GM13976 (cell line): ENCODE measurements at regions of chr10 and their contacts with region 1.

Region 1: DNA sequence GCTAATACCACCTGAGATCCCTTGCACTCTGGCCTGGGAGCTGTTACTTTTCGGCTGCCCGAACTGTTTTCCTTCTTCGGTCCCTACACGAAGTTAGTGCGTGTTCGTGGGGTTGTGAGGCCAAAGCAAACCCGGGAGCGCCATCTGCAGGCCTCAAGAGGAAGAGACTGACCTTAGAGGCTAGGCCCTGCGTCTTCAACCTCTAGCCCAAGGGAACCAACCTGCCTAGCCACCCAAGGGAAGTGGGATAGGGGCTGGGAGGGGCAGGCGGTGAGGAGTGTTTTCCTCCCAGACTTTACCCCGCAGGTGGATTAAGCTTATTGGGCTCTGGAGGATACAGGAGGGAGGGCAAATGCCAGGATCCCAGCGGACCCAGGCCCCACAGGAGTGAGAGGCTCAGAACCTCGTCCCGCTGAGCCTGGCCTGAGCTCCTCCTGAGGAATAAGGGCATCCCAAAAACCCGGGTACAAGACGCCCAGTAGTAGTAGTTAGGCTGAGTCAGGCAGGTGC is 1.7 kb upstream of the PAX2 start:
- DNase-seq: peak; percentile 85
- CTCF ChIP-seq: peak; percentile 64

Region 2: GRCh38 chr10:100229819-100230422 is 513.8 kb before region 1 on chr10:
- in situ Hi-C with region 1: no loop called
- DNase-seq: no peak
- CTCF ChIP-seq: no peak

Region 3: GRCh38 chr10:100508691-100509150 is 235.0 kb before region 1 on chr10:
- in situ Hi-C with region 1: no loop called
- DNase-seq: peak; percentile 56
- CTCF ChIP-seq: peak; percentile 22

Region 4: DNA sequence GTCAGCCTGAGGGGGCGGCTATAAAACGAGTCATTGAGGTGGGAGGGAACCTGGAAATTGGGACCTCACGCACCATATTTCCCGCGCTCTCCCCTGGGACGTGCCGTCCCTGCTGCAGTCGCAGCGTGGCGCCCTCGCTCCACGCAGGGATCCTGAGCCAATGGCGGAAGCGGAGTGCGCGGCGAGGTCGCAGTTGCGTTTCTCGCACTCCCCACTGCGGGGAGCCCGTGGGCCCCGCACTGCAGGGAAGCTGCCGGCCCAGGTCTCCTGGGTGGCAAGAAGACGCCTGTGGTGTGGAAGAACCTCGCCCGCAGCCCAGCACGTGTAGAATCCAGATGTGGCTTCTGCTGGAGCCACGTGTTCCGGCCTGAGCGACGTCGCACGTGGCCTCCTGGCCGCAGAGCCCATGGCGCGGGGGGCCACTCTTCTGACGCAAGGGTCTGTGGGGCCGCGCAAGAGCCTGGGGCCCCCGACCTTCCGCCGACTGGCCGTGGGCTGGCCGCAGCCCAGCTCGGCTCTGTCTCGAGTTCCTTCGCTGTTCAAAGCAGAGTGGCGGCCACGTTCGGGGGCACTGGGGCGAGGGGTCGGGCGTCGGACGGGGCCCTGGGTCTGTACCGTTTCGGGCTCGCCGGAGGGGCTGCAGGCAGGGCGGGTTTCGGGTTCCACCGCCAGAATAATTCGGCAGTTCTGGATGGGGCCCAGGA is 181.5 kb before region 1 on chr10:
- in situ Hi-C with region 1: loop called (anchors 25 kb)
- DNase-seq: peak; percentile 89
- CTCF ChIP-seq: peak; percentile 85